ENCODE measurements at regions of chr12 and their contacts with region 1.

Region 1: DNA sequence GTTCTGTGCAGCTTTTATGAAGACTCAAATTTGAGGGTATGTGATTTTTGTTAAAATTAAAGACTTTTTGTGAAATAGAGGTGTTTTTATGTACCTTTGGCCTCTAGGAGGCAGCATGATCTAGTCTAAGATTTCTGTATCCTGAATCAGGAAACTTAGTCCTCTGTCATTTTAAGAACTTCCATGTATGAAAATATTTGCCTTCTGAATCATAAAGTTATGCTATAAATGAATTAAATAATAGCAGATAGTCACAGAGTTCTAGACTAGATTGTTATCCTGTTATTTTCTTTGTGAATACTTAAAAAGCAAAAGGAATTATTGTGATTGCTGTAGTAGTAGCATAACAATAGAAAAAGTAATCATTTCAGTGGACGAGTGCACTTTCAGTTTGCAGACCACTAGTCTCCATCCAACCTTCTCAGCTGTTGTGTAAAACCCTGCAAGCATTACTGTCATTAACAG is 56.3 kb downstream of the FGD4 start:
- DNase-seq: no peak
- ATAC-seq: no peak
- H3K4me3 Mint-ChIP-seq: no peak overlapping the region
- H3K27ac Mint-ChIP-seq: no peak overlapping the region
- H3K4me1 Mint-ChIP-seq: no peaks in the 10 kb centered on the region
- H3K27me3 Mint-ChIP-seq: peaks cover 4% of the 10 kb centered on the region

Region 2: GRCh38 chr12:32437095-32437515 is 18.5 kb before region 1 on chr12:
- CTCF ChIA-PET with region 1: no interaction called
- DNase-seq: no peak
- ATAC-seq: no peak
- H3K4me3 Mint-ChIP-seq: no peak overlapping the region
- H3K27ac Mint-ChIP-seq: no peak overlapping the region
- H3K4me1 Mint-ChIP-seq: no peaks in the 10 kb centered on the region
- H3K27me3 Mint-ChIP-seq: peaks cover 3% of the 10 kb centered on the region

Region 3: GRCh38 chr12:32659908-32660440 is 204.3 kb after region 1 on chr12:
- CTCF ChIA-PET with region 1: interaction called, 10 read pairs
- DNase-seq: no peak
- ATAC-seq: no peak
- H3K4me3 Mint-ChIP-seq: no peak overlapping the region
- H3K27ac Mint-ChIP-seq: no peak overlapping the region
- H3K4me1 Mint-ChIP-seq: peaks cover 8% of the 10 kb centered on the region
- H3K27me3 Mint-ChIP-seq: peaks cover 2% of the 10 kb centered on the region

Region 4: GRCh38 chr12:32671930-32672780 is 216.5 kb after region 1 on chr12:
- CTCF ChIA-PET with region 1: interaction called, 22 read pairs
- DNase-seq: no peak
- ATAC-seq: peak; percentile 42
- H3K4me3 Mint-ChIP-seq: no peak overlapping the region
- H3K27ac Mint-ChIP-seq: no peak overlapping the region
- H3K4me1 Mint-ChIP-seq: no peaks in the 10 kb centered on the region
- H3K27me3 Mint-ChIP-seq: peaks cover 10% of the 10 kb centered on the region